IMR-90 (cell line): ENCODE measurements at regions of chr10 and their contacts with region 1.

Region 1: DNA sequence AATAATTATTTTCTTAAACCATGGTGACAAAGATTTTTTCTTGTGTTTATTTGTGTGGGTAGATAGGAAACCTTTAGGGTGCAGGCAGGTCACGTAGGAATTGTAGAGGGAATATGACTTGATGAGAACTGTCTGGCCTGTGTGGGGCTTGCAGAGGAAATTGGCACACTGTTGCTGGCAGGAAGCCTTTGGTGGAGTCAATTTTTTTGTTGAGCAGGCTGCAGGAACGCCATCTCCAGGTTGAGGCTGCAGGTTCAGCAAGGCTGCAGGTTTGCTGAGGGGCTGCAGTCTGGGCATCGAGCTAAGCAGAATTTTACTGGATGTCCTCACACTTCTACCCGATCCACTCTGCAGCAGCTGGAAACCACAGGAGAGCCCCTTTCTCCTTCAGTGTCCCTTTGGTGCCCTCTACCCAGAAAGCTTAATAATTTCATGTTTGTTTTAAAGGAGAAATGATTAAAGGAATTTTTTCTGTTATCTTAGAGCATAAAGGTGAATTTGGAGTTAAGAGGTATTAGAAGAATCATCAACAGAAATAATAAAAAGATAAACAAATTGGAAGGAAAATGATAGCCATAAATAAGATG is 37.0 kb downstream of the TBC1D12 start:
- DNase-seq: peak; percentile 3
- ATAC-seq: no peak
- H3K4me3 ChIP-seq: no peak overlapping the region
- H3K27ac ChIP-seq: no peak overlapping the region
- H3K4me1 ChIP-seq: no peaks in the 10 kb centered on the region; the same call in 1 of the 2 replicates
- H3K27me3 ChIP-seq: no peaks in the 10 kb centered on the region
- CTCF ChIP-seq: no peak
- POLR2A ChIP-seq: no peak
- RAD21 ChIP-seq: no peak

Region 2: DNA sequence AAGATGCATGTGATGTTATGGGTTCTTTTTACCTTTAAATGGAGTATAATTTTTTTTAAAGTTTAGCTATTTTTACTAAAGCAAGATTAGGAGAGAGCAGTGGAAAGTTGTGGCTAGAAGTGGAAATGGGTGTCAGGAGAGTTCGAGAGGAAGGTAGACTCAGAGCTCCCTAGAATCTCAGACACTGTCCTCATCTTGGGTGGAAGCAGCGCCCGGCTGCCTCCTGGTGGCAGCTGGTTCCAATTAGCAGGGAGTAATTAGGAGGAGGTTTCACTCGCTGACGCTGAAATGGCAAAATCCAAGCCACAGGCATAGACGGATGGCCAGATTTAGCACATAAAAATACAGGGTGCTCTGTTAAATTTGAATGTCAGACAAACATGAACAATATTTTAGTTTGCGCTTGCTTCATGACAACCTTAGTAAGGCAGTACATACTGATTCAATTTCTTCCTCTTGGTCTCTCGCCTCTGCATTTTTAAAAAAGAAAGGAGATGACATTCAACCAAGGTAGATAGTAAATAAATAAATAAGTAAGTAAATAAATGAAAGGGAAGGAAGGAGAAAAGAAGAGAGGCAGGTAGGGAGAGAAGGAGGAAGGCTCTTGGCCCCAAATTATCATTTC is 623.1 kb before region 1 on chr10:
- CTCF ChIA-PET with region 1: no interaction called
- POLR2A ChIA-PET with region 1: no interaction called
- dilution Hi-C with region 1: no loop called
- in situ Hi-C with region 1: no loop called
- intact Hi-C with region 1: loop called (anchors 10 kb)
- DNase-seq: peak; percentile 47
- ATAC-seq: peak; percentile 91
- H3K4me3 ChIP-seq: no peak overlapping the region
- H3K27ac ChIP-seq: no peak overlapping the region
- H3K4me1 ChIP-seq: peaks cover 6% of the 10 kb centered on the region
- H3K27me3 ChIP-seq: peaks cover 21% of the 10 kb centered on the region
- CTCF ChIP-seq: peak; percentile 65
- POLR2A ChIP-seq: no peak
- RAD21 ChIP-seq: peak; percentile 69

Region 3: GRCh38 chr10:94066411-94066810 is 373.0 kb before region 1 on chr10:
- CTCF ChIA-PET with region 1: no interaction called
- POLR2A ChIA-PET with region 1: no interaction called
- dilution Hi-C with region 1: no loop called
- in situ Hi-C with region 1: loop called (anchors 25 kb)
- intact Hi-C with region 1: no loop called
- DNase-seq: peak; percentile 65
- ATAC-seq: peak; percentile 63
- H3K4me3 ChIP-seq: no peak overlapping the region
- H3K27ac ChIP-seq: no peak overlapping the region
- H3K4me1 ChIP-seq: no peaks in the 10 kb centered on the region
- H3K27me3 ChIP-seq: peaks cover 2% of the 10 kb centered on the region; the same call in 1 of the 2 replicates
- CTCF ChIP-seq: no peak
- POLR2A ChIP-seq: no peak
- RAD21 ChIP-seq: peak; percentile 21; the same call in 1 of the 2 replicates

Region 4: DNA sequence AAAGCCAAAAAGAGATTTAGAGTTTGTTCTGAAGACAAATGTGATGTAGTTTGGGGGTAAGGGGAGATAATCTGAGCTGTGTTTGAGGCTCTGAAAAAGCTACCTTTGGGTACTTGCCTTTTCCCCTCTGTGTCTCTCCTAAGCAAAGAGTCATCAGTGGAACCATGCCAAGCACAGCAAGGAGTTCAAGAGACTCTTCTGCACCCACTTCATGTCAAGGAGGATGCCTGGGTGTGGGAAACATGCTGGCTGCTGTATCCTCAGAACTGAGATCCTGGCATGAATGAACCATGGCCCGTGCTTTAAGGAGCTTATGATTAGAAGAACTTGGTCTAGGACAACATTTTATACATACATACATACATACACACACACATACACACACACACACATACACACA is 219.5 kb before region 1 on chr10:
- CTCF ChIA-PET with region 1: no interaction called
- POLR2A ChIA-PET with region 1: no interaction called
- dilution Hi-C with region 1: no loop called
- in situ Hi-C with region 1: no loop called
- intact Hi-C with region 1: no loop called
- DNase-seq: peak; percentile 69
- ATAC-seq: no peak
- H3K4me3 ChIP-seq: no peak overlapping the region
- H3K27ac ChIP-seq: no peak overlapping the region
- H3K4me1 ChIP-seq: peaks cover 1% of the 10 kb centered on the region
- H3K27me3 ChIP-seq: no peaks in the 10 kb centered on the region
- CTCF ChIP-seq: no peak
- POLR2A ChIP-seq: no peak
- RAD21 ChIP-seq: no peak

Region 5: DNA sequence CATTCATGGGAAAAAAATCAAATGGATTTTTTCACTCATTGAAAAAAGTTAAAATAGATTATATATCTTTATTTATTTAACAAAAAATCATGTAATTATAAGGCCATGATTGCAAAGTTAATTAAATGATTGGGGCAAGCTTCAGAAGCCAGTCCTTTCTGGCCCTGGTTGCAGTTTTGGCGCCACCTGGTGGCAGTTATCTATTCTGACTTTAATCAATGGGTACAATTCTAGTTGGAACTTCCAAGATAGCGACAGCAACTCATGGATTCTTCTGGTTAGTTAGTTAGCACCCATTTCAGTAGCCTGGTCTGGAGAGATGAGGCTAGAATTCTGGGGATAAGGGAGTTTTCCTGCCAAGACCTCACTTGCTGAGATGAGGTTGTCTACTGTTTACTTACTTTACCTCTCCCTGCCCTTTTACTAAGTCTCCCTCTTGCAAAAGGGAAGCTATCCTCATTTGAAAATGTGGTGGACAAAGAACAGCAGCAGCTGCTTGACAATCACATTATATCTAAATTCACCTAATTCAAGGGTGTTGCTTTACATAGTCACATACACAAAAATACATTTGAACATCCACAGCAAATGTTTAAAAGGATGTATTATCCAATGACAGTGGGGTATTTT is 119.0 kb before region 1 on chr10:
- CTCF ChIA-PET with region 1: interaction called, 5 read pairs
- POLR2A ChIA-PET with region 1: no interaction called
- dilution Hi-C with region 1: no loop called
- in situ Hi-C with region 1: no loop called
- intact Hi-C with region 1: loop called (anchors 2 kb)
- DNase-seq: peak; percentile 52
- ATAC-seq: peak; percentile 64
- H3K4me3 ChIP-seq: no peak overlapping the region
- H3K27ac ChIP-seq: no peak overlapping the region
- H3K4me1 ChIP-seq: peaks cover 2% of the 10 kb centered on the region; the same call in 1 of the 2 replicates
- H3K27me3 ChIP-seq: no peaks in the 10 kb centered on the region
- CTCF ChIP-seq: peak; percentile 87
- POLR2A ChIP-seq: 0 out of 2 replicates have a peak, but pooled peaks have one; percentile 30
- RAD21 ChIP-seq: peak; percentile 91

Region 6: DNA sequence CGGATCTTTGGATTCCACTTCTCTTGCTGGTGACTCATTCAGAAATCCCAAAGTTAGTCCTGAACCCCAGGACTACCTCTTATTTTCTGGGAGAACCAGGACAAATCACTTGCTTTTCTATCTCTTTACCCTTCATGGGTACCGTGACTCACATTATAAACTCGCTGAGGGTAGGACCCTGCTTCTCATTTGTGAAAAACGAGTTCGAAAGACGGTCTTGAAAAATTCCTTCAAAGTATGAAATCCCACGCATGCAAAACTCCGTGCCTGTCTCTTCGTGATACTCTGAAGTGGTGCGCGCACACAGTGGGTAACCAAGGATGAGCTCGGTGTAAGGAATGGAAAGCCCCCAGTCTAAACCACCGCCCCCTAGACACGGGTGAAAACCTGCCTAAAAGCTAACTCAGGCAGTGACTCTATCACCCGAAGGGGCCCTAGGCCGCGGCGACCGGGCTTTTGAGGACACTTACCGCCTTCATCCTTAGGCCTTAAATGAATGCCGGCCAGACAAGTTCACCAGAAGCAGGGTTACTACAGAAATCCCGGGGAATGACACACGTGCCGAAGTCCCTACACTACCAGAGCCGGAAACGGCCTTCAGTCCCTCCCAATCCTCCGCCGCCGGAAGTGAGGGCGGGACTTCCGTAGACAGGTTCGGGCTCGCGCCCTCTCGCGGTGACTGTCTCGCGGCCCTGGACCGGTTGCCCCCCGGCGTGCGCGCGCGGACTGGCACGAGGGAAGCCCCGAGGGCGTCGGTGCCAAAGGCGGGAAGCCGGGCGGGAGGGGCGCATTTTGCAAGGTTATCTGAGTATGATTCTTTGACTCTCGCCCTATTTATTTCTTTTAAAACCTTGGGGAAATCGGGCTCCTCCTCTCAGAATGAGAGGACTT is 76.8 kb before region 1 on chr10 and contains the start of gene NOC3L:
- CTCF ChIA-PET with region 1: interaction called, 5 read pairs
- POLR2A ChIA-PET with region 1: no interaction called
- dilution Hi-C with region 1: no loop called
- in situ Hi-C with region 1: no loop called
- intact Hi-C with region 1: loop called (anchors 1 kb)
- DNase-seq: peak; percentile 96
- ATAC-seq: peak; percentile 97
- H3K4me3 ChIP-seq: peak within 1 kb of the TSS; percentile 64
- H3K27ac ChIP-seq: peak within 1 kb of the TSS; percentile 56
- H3K4me1 ChIP-seq: peaks cover 2% of the 10 kb centered on the region
- H3K27me3 ChIP-seq: no peaks in the 10 kb centered on the region; the same call in 1 of the 2 replicates
- CTCF ChIP-seq: peak; percentile 99
- POLR2A ChIP-seq: peak; percentile 89
- RAD21 ChIP-seq: peak; percentile 51
- total RNA-seq, gene NOC3L: 26.5 and 40.5 TPM in 2 replicates

Region 7: GRCh38 chr10:94429049-94429707 is 10.2 kb before region 1 on chr10:
- CTCF ChIA-PET with region 1: interaction called, 11 read pairs
- POLR2A ChIA-PET with region 1: interaction called, 14 read pairs
- dilution Hi-C with region 1: no loop called
- in situ Hi-C with region 1: no loop called
- intact Hi-C with region 1: no loop called
- DNase-seq: peak; percentile 66
- ATAC-seq: peak; percentile 68
- H3K4me3 ChIP-seq: no peak overlapping the region
- H3K27ac ChIP-seq: no peak overlapping the region
- H3K4me1 ChIP-seq: peaks cover 8% of the 10 kb centered on the region
- H3K27me3 ChIP-seq: no peaks in the 10 kb centered on the region
- CTCF ChIP-seq: no peak
- POLR2A ChIP-seq: no peak
- RAD21 ChIP-seq: no peak

Region 8: GRCh38 chr10:94487575-94487974 is 48.2 kb after region 1 on chr10:
- CTCF ChIA-PET with region 1: no interaction called
- POLR2A ChIA-PET with region 1: no interaction called
- dilution Hi-C with region 1: no loop called
- in situ Hi-C with region 1: no loop called
- intact Hi-C with region 1: no loop called
- DNase-seq: no peak
- ATAC-seq: no peak
- H3K4me3 ChIP-seq: no peak overlapping the region
- H3K27ac ChIP-seq: no peak overlapping the region
- H3K4me1 ChIP-seq: no peaks in the 10 kb centered on the region
- H3K27me3 ChIP-seq: no peaks in the 10 kb centered on the region
- CTCF ChIP-seq: no peak
- POLR2A ChIP-seq: no peak
- RAD21 ChIP-seq: no peak

Region 9: DNA sequence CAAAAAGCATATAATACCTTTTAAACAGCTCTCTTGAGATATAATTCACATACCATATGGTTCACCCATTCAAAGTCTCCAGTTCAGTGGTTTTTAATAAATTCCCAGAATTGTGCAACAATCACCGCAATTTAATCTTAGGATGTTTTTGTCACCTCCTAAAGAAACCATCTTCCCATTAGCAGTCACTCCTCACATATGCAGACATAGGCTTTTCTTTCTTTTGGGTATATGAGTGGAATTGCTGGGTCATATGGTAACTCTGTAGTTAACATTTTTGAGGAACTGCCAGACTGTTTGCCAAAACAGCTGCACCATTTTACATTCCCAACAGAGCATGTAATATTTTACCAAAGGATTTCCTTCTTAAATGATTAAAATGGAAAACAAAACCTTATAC is 1525.4 kb after region 1 on chr10:
- CTCF ChIA-PET with region 1: no interaction called
- POLR2A ChIA-PET with region 1: no interaction called
- dilution Hi-C with region 1: no loop called
- in situ Hi-C with region 1: no loop called
- intact Hi-C with region 1: no loop called
- DNase-seq: no peak
- ATAC-seq: no peak
- H3K4me3 ChIP-seq: no peak overlapping the region
- H3K27ac ChIP-seq: no peak overlapping the region
- H3K4me1 ChIP-seq: no peaks in the 10 kb centered on the region
- H3K27me3 ChIP-seq: no peaks in the 10 kb centered on the region
- CTCF ChIP-seq: no peak
- POLR2A ChIP-seq: no peak
- RAD21 ChIP-seq: no peak